ENCODE measurements at regions of chr1 and their contacts with region 1.

Region 1: DNA sequence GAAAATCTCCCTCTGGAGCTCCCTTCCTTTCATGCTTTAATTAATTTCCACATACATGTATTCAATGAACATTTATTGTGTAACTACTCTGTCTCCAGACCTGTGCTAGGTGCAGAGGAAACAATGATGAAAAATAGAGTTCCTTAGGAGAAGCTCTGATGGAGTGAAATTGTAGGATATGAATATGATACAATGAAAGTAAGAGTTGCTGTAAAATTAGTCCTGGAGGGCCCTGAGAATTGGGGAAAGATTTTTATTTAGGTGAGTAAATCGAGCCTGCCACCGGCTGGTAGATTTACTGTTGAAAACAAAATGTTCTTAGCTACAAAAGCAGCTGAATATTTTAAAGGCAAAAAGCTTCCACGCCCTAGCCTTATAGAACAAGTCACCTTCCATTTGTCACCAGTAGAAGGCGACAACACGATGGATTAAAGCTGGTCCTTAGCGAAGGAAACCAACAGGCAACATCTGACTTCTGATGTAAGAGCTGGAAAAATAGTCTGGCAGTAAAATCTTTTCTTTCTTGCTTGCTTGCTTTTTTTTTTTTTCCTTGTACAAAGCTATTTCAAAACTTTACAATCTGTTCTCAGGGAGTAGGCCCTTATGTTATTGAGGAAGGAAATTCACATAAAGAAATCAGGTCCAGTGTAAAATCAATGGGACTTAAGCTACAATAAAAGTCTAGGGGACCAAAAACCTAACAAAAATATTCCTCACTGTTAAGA is 82.0 kb upstream of the ROR1 start:
- DNase-seq: peak; percentile 46
- ATAC-seq: peak; percentile 78
- H3K4me3 Mint-ChIP-seq: no peak overlapping the region
- H3K27ac Mint-ChIP-seq: no peak overlapping the region
- H3K4me1 Mint-ChIP-seq: no peaks in the 10 kb centered on the region
- H3K27me3 Mint-ChIP-seq: no peaks in the 10 kb centered on the region
- CTCF ChIP-seq: peak; percentile 62

Region 2: GRCh38 chr1:63615768-63616420 is 76.0 kb before region 1 on chr1:
- CTCF ChIA-PET with region 1: interaction called, 10 read pairs
- POLR2A ChIA-PET with region 1: no interaction called
- intact Hi-C with region 1: no loop called
- DNase-seq: peak; percentile 68
- ATAC-seq: peak; percentile 69
- H3K4me3 Mint-ChIP-seq: no peak overlapping the region
- H3K27ac Mint-ChIP-seq: no peak overlapping the region
- H3K4me1 Mint-ChIP-seq: no peaks in the 10 kb centered on the region
- H3K27me3 Mint-ChIP-seq: no peaks in the 10 kb centered on the region
- CTCF ChIP-seq: peak; percentile 84

Region 3: GRCh38 chr1:63675420-63675931 is 16.4 kb before region 1 on chr1:
- CTCF ChIA-PET with region 1: interaction called, 16 read pairs
- POLR2A ChIA-PET with region 1: no interaction called
- intact Hi-C with region 1: no loop called
- DNase-seq: no peak
- ATAC-seq: no peak
- H3K4me3 Mint-ChIP-seq: no peak overlapping the region
- H3K27ac Mint-ChIP-seq: no peak overlapping the region
- H3K4me1 Mint-ChIP-seq: no peaks in the 10 kb centered on the region
- H3K27me3 Mint-ChIP-seq: no peaks in the 10 kb centered on the region
- CTCF ChIP-seq: no peak

Region 4: GRCh38 chr1:63713041-63713440 is 21.2 kb after region 1 on chr1:
- CTCF ChIA-PET with region 1: no interaction called
- POLR2A ChIA-PET with region 1: no interaction called
- intact Hi-C with region 1: no loop called
- DNase-seq: no peak
- ATAC-seq: no peak
- H3K4me3 Mint-ChIP-seq: no peak overlapping the region
- H3K27ac Mint-ChIP-seq: no peak overlapping the region
- H3K4me1 Mint-ChIP-seq: no peaks in the 10 kb centered on the region
- H3K27me3 Mint-ChIP-seq: peaks cover 1% of the 10 kb centered on the region
- CTCF ChIP-seq: no peak

Region 5: GRCh38 chr1:63915121-63915520 is 223.3 kb after region 1 on chr1:
- CTCF ChIA-PET with region 1: interaction called, 10 read pairs
- POLR2A ChIA-PET with region 1: no interaction called
- intact Hi-C with region 1: no loop called
- DNase-seq: no peak
- ATAC-seq: no peak
- H3K4me3 Mint-ChIP-seq: no peak overlapping the region
- H3K27ac Mint-ChIP-seq: no peak overlapping the region
- H3K4me1 Mint-ChIP-seq: no peaks in the 10 kb centered on the region
- H3K27me3 Mint-ChIP-seq: peaks cover 1% of the 10 kb centered on the region
- CTCF ChIP-seq: no peak

Region 6: DNA sequence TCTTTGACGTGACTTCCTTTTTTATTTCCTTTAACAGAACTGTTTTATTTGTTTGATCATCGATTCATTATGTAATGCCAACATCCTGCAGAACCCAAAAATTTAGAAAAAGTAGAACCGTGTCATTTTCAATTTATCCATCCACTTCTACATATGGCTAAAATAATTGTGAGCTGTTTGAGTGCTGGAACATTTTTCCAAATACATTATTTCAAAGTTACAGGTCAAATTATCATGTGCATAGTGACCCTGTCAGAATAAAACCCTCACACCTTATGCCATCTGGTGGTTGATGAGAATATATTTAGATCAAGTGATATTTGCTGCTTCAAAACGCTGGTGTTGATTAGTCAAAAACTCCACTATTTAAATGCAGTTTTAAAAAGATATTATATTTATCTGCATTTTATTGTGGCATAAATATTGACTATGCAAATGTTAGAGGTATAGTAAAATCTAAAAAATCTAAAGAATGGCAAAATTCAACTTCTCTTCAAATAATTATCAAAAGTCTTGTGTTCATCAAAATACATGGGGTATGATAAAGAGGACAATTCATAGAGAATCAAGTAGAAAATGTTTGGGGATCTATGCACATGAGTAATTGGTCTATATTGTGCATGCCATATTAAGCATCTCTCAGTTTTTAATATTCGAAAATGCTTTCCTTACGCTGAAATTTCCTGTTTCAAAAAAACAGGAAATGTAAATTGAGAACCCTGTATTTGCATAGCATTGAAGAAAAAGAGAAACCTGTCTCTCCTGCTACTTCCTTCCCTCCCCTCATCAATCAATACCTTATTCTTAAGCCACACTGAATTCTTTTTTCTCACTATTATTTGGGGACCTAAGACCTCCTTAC is 551.3 kb after region 1 on chr1:
- CTCF ChIA-PET with region 1: interaction called, 28 read pairs
- POLR2A ChIA-PET with region 1: no interaction called
- intact Hi-C with region 1: loop called (anchors 5 kb)
- DNase-seq: no peak
- ATAC-seq: no peak
- H3K4me3 Mint-ChIP-seq: peak overlapping the region; percentile 24
- H3K27ac Mint-ChIP-seq: no peak overlapping the region
- H3K4me1 Mint-ChIP-seq: peaks cover 20% of the 10 kb centered on the region
- H3K27me3 Mint-ChIP-seq: peaks cover 6% of the 10 kb centered on the region
- CTCF ChIP-seq: peak; percentile 59

Measured in activated CD8-positive, alpha-beta T cell treated with anti-CD3 and anti-CD28 coated beads for 36 hours (primary cell).